ENCODE measurements at regions of chr2 and their contacts with region 1.

Region 1: GRCh38 chr2:197434541-197435513 is at the start of gene SF3B1:
- DNase-seq: peak; percentile 99
- H3K4me3 Mint-ChIP-seq: peak within 1 kb of the TSS; percentile 95
- H3K27ac Mint-ChIP-seq: peak within 1 kb of the TSS; percentile 99
- H3K4me1 Mint-ChIP-seq: peaks cover 50% of the 10 kb centered on the region
- H3K27me3 Mint-ChIP-seq: no peaks in the 10 kb centered on the region
- total RNA-seq, gene SF3B1: 247 and 268 TPM in 2 replicates

Region 2: DNA sequence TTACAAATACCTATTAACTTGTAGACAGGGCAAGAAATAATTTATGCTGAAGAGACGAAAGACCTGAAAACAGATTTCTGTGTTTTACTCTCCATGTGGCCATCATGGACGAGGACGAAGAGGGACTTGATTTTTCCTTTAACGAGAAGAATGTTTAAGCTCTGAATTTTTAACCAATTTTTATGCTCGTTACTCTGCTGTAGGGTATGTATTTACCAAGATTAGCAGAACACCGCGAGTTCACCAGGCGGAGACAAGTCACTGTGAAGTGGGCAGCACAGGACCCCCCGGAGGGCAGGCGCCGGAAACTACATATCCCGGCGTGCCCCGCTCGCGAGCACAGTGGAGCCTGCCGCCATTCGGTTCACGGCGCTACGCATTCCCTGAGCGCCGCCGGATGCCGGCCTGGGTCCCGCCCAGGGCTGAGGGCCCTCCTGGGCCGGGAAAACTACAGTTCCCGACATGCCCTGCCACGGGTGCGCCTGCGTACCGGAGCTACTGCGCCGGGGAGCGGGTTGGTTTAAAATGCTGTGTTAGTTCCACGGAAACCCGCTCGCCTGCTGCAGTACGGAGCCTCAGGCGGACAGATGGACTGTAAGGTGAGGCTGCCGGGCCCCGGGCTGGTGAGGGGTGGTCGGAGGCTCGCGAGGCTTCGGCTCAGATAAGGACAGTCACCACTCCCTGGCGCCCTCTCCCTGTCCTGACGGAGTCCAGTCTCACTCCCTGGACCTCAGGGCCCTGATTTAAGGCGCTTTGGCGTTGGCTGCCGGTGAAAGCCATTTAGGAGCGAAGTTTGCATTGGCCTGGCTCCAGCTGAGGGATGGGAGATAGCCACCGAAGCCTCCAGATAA is 795.4 kb before region 1 on chr2 and contains the start of gene CCDC150:
- intact Hi-C with region 1: loop called (anchors 1 kb)
- DNase-seq: peak; percentile 93
- H3K4me3 Mint-ChIP-seq: peak within 1 kb of the TSS; percentile 78
- H3K27ac Mint-ChIP-seq: peak within 1 kb of the TSS; percentile 81
- H3K4me1 Mint-ChIP-seq: peaks cover 28% of the 10 kb centered on the region
- H3K27me3 Mint-ChIP-seq: peaks cover 13% of the 10 kb centered on the region
- total RNA-seq, gene CCDC150: 16.7 and 19.6 TPM in 2 replicates

Region 3: GRCh38 chr2:197304556-197305011 is 130.2 kb before region 1 on chr2:
- intact Hi-C with region 1: loop called (anchors 2 kb)
- DNase-seq: no peak
- H3K4me3 Mint-ChIP-seq: peak overlapping the region; percentile 84
- H3K27ac Mint-ChIP-seq: peak overlapping the region; percentile 95
- H3K4me1 Mint-ChIP-seq: peaks cover 87% of the 10 kb centered on the region
- H3K27me3 Mint-ChIP-seq: no peaks in the 10 kb centered on the region

Region 4: DNA sequence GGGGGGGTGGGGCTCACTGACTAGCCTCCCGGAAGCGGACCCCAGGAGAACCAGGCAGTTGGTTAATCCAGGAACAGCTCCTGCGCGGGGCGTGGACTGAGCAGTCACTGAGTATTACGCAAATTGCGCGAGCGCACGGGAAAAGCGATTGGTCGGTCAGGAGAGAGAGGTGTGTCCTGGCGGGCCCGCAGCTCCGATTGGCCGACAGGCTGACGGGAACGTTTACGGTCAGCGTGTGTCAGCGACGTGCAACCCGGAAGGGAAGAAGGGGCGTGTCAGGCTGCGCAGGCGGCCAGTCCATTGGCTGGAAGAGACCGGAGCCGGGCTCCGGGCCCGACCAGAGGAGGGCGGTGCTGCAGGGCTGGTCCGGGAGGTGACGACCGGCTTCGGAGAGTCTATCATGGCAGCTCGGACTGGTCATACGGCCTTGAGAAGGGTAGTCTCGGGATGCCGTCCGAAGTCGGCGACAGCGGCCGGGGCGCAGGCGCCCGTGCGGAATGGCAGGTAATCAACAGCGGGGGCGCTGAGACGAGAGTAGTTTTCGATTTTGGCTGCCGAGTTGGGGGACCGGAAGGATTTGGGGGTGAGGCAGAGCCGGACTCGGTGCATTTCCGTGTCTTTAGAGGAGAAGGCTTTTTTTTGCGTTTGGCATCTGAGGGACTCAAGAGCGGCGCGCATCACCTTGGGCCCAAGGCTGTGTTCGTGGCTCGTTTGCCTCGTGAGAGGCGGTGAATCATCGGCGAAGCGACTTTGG is 18.5 kb after region 1 on chr2 and contains the start of gene COQ10B:
- intact Hi-C with region 1: loop called (anchors 1 kb)
- DNase-seq: peak; percentile 99
- H3K4me3 Mint-ChIP-seq: peak within 1 kb of the TSS; percentile 99
- H3K27ac Mint-ChIP-seq: peak within 1 kb of the TSS; percentile 100
- H3K4me1 Mint-ChIP-seq: peaks cover 40% of the 10 kb centered on the region
- H3K27me3 Mint-ChIP-seq: no peaks in the 10 kb centered on the region
- total RNA-seq, gene COQ10B: 26.9 and 28.8 TPM in 2 replicates

Region 5: DNA sequence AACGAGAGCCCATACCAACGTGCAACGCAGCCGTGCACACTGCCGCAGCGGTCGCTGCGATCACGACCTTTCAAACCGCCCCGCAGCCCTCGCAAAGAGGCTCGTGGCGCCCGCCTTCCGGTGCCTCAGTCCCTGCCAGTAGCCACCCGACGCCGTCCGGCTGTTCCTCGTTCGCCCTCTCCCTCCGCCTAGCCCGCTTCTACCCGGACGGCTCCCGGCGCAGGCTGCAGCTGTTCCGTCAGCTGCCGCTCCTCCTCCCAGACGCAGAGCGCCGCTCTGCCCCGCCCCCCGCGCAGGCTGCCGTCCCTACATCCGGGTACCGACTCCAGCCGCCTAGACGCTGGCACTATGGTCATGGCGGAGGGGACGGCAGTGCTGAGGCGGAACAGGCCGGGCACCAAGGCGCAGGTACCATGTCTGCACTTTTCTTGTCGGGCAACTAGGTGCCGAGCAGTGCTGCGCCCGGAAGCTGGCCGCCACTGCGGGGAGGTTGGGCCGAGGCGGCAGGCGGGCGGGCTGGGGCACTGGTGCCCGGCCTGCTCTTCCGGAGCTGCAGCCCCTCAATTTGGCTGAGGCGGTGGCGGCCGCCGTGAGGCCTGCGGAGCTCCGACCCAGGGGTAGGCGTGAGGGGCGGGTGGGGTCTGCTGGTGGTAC is 81.0 kb after region 1 on chr2 and contains the start of gene MOB4:
- intact Hi-C with region 1: loop called (anchors 1 kb)
- DNase-seq: peak; percentile 95
- H3K4me3 Mint-ChIP-seq: peak within 1 kb of the TSS; percentile 98
- H3K27ac Mint-ChIP-seq: peak within 1 kb of the TSS; percentile 90
- H3K4me1 Mint-ChIP-seq: peaks cover 32% of the 10 kb centered on the region
- H3K27me3 Mint-ChIP-seq: no peaks in the 10 kb centered on the region
- total RNA-seq, gene MOB4: 25.1 and 27.2 TPM in 2 replicates

Region 6: GRCh38 chr2:198004921-198005829 is 570.3 kb after region 1 on chr2:
- intact Hi-C with region 1: loop called (anchors 10 kb)
- DNase-seq: peak; percentile 30
- H3K4me3 Mint-ChIP-seq: peak overlapping the region; percentile 46
- H3K27ac Mint-ChIP-seq: peak overlapping the region; percentile 76
- H3K4me1 Mint-ChIP-seq: peaks cover 50% of the 10 kb centered on the region
- H3K27me3 Mint-ChIP-seq: no peaks in the 10 kb centered on the region